ENCODE measurements at regions of chr11 and their contacts with region 1.

Region 1: DNA sequence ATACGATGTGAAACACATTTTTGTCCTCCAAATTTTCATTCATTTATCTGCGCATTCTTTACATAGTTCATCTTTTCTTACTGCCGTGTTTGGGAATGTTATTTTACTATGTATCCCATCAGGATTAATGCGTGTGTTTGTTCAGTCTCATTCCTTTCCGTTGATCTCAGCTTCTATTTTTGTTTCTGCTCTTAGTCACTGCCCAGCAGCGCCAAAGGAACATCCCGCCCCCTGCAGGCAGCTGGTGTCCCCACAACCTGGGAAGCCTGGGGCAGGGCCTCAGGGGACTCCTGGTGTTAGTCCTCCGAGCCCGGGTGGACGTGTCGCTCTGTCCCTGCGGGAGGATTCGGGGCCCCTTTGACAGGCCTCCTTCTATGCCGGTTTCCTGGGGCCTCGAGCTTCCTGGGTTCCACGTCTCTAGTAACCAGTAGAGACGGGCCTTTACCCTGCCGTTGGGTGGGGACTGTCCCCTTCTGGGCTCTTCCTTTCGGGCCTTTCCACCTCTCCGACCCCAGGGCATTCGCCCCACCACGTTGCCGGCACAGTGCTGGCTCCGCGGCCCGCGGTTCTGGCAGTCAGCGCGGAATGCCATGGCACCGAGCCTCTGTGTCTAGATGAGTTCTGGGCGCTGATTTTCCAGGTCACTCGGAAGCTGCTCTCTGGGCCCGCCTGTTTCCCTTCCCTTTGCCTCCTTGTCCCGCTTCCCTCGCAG is 39.8 kb downstream of the WEE1 start:
- DNase-seq: peak; percentile 94 to 96 (median 95)
- ATAC-seq: peak; percentile 90
- H3K4me3 ChIP-seq: peak overlapping the region; percentile 14
- H3K4me1 ChIP-seq: peaks cover 4% of the 10 kb centered on the region
- CTCF ChIP-seq: peak; percentile 96

Region 2: GRCh38 chr11:9534791-9535781 is 78.2 kb before region 1 on chr11:
- intact Hi-C with region 1: loop called in 1 of 2 experiments (anchors 10 kb)
- DNase-seq: peak; percentile 81 to 91 (median 89)
- ATAC-seq: peak; percentile 80
- H3K4me3 ChIP-seq: no peak overlapping the region
- H3K4me1 ChIP-seq: peaks cover 1% of the 10 kb centered on the region
- CTCF ChIP-seq: peak; percentile 76

Region 3: DNA sequence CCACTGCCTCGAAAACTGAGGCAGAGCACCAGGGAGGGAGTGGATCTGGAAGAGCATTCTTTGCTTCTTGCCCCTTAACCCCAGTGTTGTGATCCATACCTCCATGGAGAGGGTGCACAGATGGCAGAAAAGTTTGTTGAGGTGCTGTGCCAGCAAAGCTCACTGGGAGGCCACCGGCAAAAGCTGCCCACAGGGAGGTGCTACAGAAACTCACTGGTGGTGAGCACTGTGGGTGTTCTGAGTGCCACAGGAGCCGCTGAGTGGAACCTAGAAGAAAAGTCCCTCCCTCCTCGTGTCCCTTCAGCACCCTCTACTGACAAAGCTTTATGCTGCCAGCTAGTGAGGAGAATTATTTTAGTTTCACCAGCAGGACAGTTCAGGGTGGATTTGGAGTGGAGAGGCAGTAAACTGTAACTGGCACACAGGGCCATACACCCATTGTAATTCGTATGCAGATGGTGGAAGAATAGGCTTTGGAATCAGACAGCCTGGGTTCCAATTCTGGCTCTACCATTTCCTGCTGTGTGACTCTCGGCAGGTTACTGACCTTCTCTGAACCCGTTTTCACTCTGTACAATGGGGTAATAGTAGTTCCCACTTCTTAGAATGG is 135.2 kb after region 1 on chr11:
- intact Hi-C with region 1: loop called in 1 of 2 experiments (anchors 5 kb)
- DNase-seq: peak; percentile 53 to 65 (median 62)
- ATAC-seq: peak; percentile 94
- H3K4me3 ChIP-seq: no peak overlapping the region
- H3K4me1 ChIP-seq: peaks cover 3% of the 10 kb centered on the region
- CTCF ChIP-seq: peak; percentile 51

Measured in mucosa of descending colon (tissue), 3 donors.